ENCODE measurements at regions of chr2 and their contacts with region 1.

Region 1: GRCh38 chr2:181104512-181105115 is 124.2 kb downstream of the UBE2E3 start:
- DNase-seq: peak; percentile 5
- H3K4me3 ChIP-seq: no peak overlapping the region
- H3K27ac ChIP-seq: no peak overlapping the region
- H3K4me1 ChIP-seq: no peaks in the 10 kb centered on the region
- H3K27me3 ChIP-seq: no peaks in the 10 kb centered on the region
- CTCF ChIP-seq: peak; percentile 24 to 61 (median 41)
- POLR2A ChIP-seq: no peak

Region 2: DNA sequence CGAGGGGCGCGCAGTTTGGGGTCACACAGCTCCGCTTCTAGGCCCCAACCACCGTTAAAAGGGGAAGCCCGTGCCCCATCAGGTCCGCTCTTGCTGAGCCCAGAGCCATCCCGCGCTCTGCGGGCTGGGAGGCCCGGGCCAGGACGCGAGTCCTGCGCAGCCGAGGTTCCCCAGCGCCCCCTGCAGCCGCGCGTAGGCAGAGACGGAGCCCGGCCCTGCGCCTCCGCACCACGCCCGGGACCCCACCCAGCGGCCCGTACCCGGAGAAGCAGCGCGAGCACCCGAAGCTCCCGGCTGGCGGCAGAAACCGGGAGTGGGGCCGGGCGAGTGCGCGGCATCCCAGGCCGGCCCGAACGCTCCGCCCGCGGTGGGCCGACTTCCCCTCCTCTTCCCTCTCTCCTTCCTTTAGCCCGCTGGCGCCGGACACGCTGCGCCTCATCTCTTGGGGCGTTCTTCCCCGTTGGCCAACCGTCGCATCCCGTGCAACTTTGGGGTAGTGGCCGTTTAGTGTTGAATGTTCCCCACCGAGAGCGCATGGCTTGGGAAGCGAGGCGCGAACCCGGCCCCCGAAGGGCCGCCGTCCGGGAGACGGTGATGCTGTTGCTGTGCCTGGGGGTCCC is 352.6 kb after region 1 on chr2 and contains the start of gene ITGA4:
- intact Hi-C with region 1: loop called (anchors 5 kb)
- DNase-seq: peak; percentile 20
- H3K4me3 ChIP-seq: peak within 1 kb of the TSS; percentile 26 to 31
- H3K27ac ChIP-seq: peak within 1 kb of the TSS in 1 of 2 donors; percentile 26
- H3K4me1 ChIP-seq: no peaks in the 10 kb centered on the region
- H3K27me3 ChIP-seq: peaks cover 5% of the 10 kb centered on the region
- CTCF ChIP-seq: peak in 3 of 4 experiments; percentile 36 to 52 (median 47)
- POLR2A ChIP-seq: no peak
- total RNA-seq, gene ITGA4: 2.9 to 6.4 TPM

Region 3: GRCh38 chr2:181586569-181587081 is 482.0 kb after region 1 on chr2:
- intact Hi-C with region 1: no loop called
- DNase-seq: no peak
- H3K4me3 ChIP-seq: no peak overlapping the region
- H3K27ac ChIP-seq: no peak overlapping the region
- H3K4me1 ChIP-seq: no peaks in the 10 kb centered on the region
- H3K27me3 ChIP-seq: peaks cover 2% of the 10 kb centered on the region
- CTCF ChIP-seq: no peak
- POLR2A ChIP-seq: no peak

Measured in prostate gland (tissue), 2 donors.